Heart right ventricle (tissue), 16 donors: ENCODE measurements at regions of chr1 and their contacts with region 1.

Region 1: GRCh38 chr1:161314201-161314981 is at the start of gene SDHC:
- DNase-seq: peak; percentile 90 to 91
- ATAC-seq: peak; percentile 99 to 100 (median 99)
- H3K4me3 ChIP-seq: peak within 1 kb of the TSS; percentile 65 to 98 (median 88)
- H3K27ac ChIP-seq: peak within 1 kb of the TSS; percentile 82 to 99 (median 94)
- H3K4me1 ChIP-seq: peaks cover 3 to 29% (median 17%) of the 10 kb centered on the region in 9 donors
- H3K27me3 ChIP-seq: peaks cover 0 to 3% (median 0%) of the 10 kb centered on the region in 7 donors
- CTCF ChIP-seq: peak in 6 of 9 donors; percentile 11 to 45 (median 28)
- total RNA-seq, gene SDHC: 342 to 459 (median 420) TPM

Region 2: GRCh38 chr1:160664573-160665051 is 649.8 kb before region 1 on chr1:
- intact Hi-C with region 1: no loop called
- DNase-seq: no peak
- ATAC-seq: peak in 5 of 8 donors; percentile 10 to 62 (median 42)
- H3K4me3 ChIP-seq: no peak overlapping the region
- H3K27ac ChIP-seq: peak overlapping the region in 6 of 10 donors; percentile 69 to 93 (median 80)
- H3K4me1 ChIP-seq: peaks cover 0 to 57% (median 16%) of the 10 kb centered on the region in 9 donors
- H3K27me3 ChIP-seq: no peaks in the 10 kb centered on the region
- CTCF ChIP-seq: no peak

Region 3: GRCh38 chr1:160997323-160998038 is 316.9 kb before region 1 on chr1:
- intact Hi-C with region 1: no loop called
- DNase-seq: peak; percentile 45 to 83
- ATAC-seq: peak; percentile 89 to 95 (median 92)
- H3K4me3 ChIP-seq: no peak overlapping the region
- H3K27ac ChIP-seq: peak overlapping the region in 9 of 10 donors; percentile 47 to 82 (median 75)
- H3K4me1 ChIP-seq: peaks cover 0 to 30% (median 12%) of the 10 kb centered on the region in 9 donors
- H3K27me3 ChIP-seq: no peaks in the 10 kb centered on the region
- CTCF ChIP-seq: peak; percentile 43 to 83 (median 68)

Region 4: DNA sequence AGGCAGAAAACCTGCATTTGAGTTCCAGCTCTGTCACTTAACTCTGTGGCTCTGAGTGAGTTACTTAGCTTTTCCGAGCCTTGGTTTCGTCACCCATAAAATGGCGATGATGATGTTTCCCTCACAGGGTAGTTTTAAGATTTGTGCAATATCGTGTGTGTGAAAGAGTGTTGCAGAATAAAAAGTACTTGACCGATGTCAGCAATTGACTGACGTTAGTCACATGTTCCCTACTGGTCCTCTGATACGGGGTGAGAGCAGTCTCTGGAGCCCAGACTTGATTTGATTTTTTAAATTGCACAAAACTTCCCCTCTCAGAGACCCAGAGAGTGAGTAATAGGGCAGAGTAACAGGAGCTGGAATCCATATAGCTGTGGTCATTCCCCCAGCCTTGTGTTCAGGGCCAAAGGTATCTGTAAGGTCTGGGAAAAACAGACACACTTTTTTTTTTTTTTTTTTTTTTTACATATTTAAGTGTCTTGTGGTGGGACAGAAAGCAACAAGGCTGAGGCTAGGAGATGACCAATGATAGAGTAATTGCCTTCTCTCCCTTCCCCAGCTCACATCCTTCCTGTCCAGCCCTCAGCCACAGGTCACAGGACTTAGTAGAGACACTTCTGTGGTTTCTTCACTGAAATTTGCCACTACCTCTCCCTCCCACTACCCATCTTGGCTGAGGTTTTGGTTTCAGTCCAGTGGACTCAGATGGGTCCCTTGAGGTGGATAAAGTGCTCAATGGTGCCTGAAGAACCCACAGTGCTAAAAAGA is 97.3 kb before region 1 on chr1:
- intact Hi-C with region 1: no loop called
- DNase-seq: no peak
- ATAC-seq: peak in 6 of 8 donors; percentile 29 to 82 (median 38)
- H3K4me3 ChIP-seq: peak overlapping the region in 6 of 10 donors; percentile 16 to 62 (median 24)
- H3K27ac ChIP-seq: peak overlapping the region in 9 of 10 donors; percentile 13 to 95 (median 69)
- H3K4me1 ChIP-seq: peaks cover 0 to 48% (median 4%) of the 10 kb centered on the region in 9 donors
- H3K27me3 ChIP-seq: no peaks in the 10 kb centered on the region
- CTCF ChIP-seq: no peak

Region 5: GRCh38 chr1:161351482-161351881 is 37.1 kb after region 1 on chr1:
- intact Hi-C with region 1: loop called in 1 of 10 experiments (anchors 5 kb)
- DNase-seq: no peak
- ATAC-seq: peak in 1 of 8 donors; percentile 44
- H3K4me3 ChIP-seq: no peak overlapping the region
- H3K27ac ChIP-seq: peak overlapping the region in 1 of 10 donors; percentile 80
- H3K4me1 ChIP-seq: peaks cover 0 to 24% (median 4%) of the 10 kb centered on the region in 9 donors
- H3K27me3 ChIP-seq: no peaks in the 10 kb centered on the region
- CTCF ChIP-seq: no peak